ENCODE measurements at regions of chr4 and their contacts with region 1.

Region 1: DNA sequence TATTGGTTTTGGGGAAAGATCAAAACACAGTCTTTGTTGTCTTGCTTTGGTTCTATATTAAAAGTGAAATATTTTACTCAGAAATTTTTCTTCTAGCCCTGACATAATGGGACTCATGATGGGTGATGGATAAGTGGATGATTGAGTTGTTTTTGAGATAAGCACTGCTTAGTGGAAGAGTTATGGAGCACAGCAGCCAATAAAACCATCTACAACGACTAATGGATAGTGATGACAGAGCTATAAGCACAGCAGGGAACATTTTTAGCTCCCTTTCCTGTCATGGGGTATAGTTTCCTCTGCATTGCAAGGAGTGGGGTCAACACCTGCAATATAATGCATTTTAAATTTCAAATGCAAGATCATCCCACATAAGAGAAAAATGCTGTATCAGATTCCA is 812.4 kb downstream of the STPG2 start:
- DNase-seq: no peak
- H3K4me3 ChIP-seq: no peak overlapping the region
- H3K27ac ChIP-seq: no peak overlapping the region
- H3K4me1 ChIP-seq: no peaks in the 10 kb centered on the region
- H3K27me3 ChIP-seq: no peaks in the 10 kb centered on the region
- CTCF ChIP-seq: no peak
- EP300 ChIP-seq: no peak
- POLR2A ChIP-seq: no peak

Region 2: DNA sequence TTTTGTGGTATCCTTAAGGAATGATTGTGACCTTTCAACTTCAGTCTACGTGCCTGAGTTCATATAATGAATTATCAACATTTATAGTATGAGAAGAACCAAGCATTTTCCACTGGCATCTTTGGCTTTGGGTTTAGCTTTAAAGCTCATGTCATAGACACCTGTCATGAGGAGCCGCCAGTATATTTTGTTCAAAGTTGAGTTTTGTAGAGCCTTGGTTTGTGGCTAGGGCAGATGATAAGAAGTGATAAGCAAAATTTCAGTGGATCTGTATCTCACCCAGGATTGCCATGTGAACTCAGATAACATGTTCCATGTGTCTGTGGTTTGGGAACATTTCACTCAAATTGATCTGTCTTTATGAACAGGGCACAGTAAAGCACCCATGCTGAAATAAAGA is 60.9 kb before region 1 on chr4:
- intact Hi-C with region 1: loop called in 1 of 4 experiments (anchors 2 kb)
- DNase-seq: no peak
- H3K4me3 ChIP-seq: no peak overlapping the region
- H3K27ac ChIP-seq: no peak overlapping the region
- H3K4me1 ChIP-seq: no peaks in the 10 kb centered on the region
- H3K27me3 ChIP-seq: no peaks in the 10 kb centered on the region
- CTCF ChIP-seq: no peak
- EP300 ChIP-seq: no peak
- POLR2A ChIP-seq: no peak